Posterior vena cava (tissue), 2 donors: ENCODE measurements at regions of chr20 and their contacts with region 1.

Region 1: GRCh38 chr20:22905658-22906057 is 129.5 kb upstream of the SSTR4 start:
- DNase-seq: no peak

Region 2: DNA sequence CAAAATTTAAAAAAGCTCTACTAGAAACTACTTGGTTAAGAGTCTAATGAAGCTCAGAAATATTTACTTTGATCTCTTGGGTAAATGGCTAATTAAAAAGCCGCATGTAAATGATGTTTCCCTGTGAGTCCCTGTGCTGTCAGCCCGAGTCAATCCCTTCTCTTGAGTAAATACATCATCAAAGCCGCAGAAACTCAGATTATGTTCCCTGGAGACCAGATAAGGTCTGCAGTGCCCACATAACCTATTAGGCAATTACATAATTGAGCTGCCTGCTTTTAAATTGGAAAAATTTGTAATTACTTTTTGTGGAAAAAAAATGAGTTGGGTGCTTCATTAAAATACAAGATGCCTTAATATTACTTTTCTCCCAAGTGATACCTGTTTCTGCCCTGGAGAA is 1696.7 kb before region 1 on chr20:
- intact Hi-C with region 1: loop called in 1 of 2 experiments (anchors 5 kb)
- DNase-seq: no peak